A549 (cell line): ENCODE measurements at regions of chr12 and their contacts with region 1.

Region 1: DNA sequence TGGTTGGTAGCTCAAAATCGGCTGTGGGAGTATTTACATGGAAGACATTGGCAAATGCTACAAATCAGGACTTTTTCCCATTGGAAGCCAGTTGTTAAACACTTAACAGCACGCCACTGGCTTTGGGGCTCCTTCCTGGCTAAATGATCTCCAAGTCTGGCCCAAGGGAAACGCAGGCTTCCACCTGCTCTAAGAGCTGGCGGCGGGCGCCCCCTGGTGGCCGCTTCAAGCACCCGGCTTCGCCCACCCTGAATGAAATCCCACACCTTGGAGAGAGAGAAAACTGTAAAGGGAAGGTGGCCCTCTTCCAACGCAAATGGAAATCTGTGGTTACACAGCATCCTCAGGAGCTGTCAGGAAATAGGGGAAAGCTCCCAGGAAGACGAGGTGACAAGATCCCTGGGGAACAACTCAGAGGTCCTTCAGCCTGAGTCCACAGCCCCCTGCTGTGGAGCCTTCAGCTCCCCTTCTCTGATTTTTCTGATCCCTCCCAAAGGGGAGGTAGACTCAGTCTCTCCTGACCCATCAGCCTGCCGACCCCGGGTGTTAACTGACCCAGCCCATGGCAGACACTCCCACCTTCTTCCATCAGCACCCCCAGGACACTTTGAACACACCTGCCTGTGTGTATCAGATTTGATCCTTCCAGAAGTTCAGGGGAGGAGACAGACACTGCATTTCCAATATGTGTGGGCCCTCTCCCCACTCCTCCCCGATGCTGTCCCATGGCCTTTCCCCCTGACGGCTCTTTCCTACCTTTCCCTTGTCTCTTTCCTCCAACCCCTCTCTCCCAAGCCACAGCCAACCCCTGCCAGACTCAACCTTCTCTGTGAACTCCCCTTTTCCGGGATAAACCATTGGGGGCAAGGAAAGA is 15.4 kb downstream of the SELPLG start:
- DNase-seq: peak; percentile 86 to 90
- ATAC-seq: peak; percentile 81 to 94
- H3K4me3 ChIP-seq: no peak overlapping the region
- H3K27ac ChIP-seq: peak overlapping the region in 1 of 2 experiments; percentile 17; a peak in 2 of 6 replicates
- H3K4me1 ChIP-seq: peaks cover 7% of the 10 kb centered on the region
- CTCF ChIP-seq: peak; percentile 96
- EP300 ChIP-seq: no peak
- POLR2A ChIP-seq: no peak
- RAD21 ChIP-seq: peak; percentile 96 to 98

Region 2: DNA sequence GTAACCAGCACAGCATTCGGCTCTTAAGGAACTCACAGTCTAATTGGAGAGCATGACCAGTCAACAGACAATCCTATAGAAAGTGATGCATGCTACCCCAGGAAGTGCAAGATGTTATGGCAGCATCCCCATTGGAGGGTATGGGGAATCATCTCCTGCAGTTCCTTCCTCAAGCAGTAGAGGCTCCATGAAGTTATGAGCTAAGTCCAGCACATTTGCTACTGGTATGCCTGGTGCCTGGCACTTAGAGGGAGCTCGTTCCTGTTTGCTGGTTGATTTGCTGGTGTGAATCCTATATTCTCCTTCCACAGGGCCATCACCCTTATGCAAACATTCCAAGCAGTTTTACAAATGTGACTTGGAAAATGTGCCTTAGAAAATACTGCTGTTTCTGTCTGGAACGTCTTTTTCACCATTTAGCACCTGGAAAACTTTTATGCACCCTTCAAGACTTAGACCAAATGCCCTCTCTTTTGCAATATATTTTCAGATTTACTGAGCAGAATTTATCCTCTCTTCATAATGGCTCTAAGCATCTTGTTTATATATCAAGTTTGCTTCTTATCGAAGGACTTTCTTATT is 625.4 kb before region 1 on chr12:
- CTCF ChIA-PET with region 1: interaction called, 14 read pairs
- POLR2A ChIA-PET with region 1: no interaction called
- DNase-seq: peak; percentile 27 to 69
- ATAC-seq: peak; percentile 96 to 100
- H3K4me3 ChIP-seq: no peak overlapping the region
- H3K27ac ChIP-seq: no peak overlapping the region
- H3K4me1 ChIP-seq: no peaks in the 10 kb centered on the region
- CTCF ChIP-seq: peak; percentile 20; the same call in 2 of the 3 replicates
- EP300 ChIP-seq: no peak
- POLR2A ChIP-seq: no peak
- RAD21 ChIP-seq: peak in 1 of 2 experiments; percentile 45; a peak in 3 of 5 replicates

Region 3: GRCh38 chr12:108547686-108548085 is 70.6 kb before region 1 on chr12:
- CTCF ChIA-PET with region 1: interaction called, 12 read pairs
- POLR2A ChIA-PET with region 1: no interaction called
- DNase-seq: no peak
- ATAC-seq: no peak
- H3K4me3 ChIP-seq: no peak overlapping the region
- H3K27ac ChIP-seq: no peak overlapping the region
- H3K4me1 ChIP-seq: no peaks in the 10 kb centered on the region
- CTCF ChIP-seq: no peak
- EP300 ChIP-seq: no peak
- POLR2A ChIP-seq: no peak
- RAD21 ChIP-seq: no peak

Region 4: GRCh38 chr12:108583991-108584390 is 34.3 kb before region 1 on chr12:
- CTCF ChIA-PET with region 1: interaction called, 24 read pairs
- POLR2A ChIA-PET with region 1: no interaction called
- DNase-seq: no peak
- ATAC-seq: peak in 1 of 2 experiments; percentile 13; a peak in 3 of 6 replicates
- H3K4me3 ChIP-seq: no peak overlapping the region
- H3K27ac ChIP-seq: no peak overlapping the region
- H3K4me1 ChIP-seq: no peaks in the 10 kb centered on the region
- CTCF ChIP-seq: no peak
- EP300 ChIP-seq: no peak
- POLR2A ChIP-seq: no peak
- RAD21 ChIP-seq: no peak

Region 5: GRCh38 chr12:108633534-108634248 is 15.4 kb after region 1 on chr12 and contains the start of gene SELPLG:
- CTCF ChIA-PET with region 1: interaction called, 178 read pairs
- POLR2A ChIA-PET with region 1: no interaction called
- DNase-seq: no peak
- ATAC-seq: no peak
- H3K4me3 ChIP-seq: no peak within 1 kb of the TSS
- H3K27ac ChIP-seq: peak within 1 kb of the TSS; percentile 41 to 60; a peak in 5 of 6 replicates
- H3K4me1 ChIP-seq: peaks cover 35% of the 10 kb centered on the region
- CTCF ChIP-seq: no peak
- EP300 ChIP-seq: no peak
- POLR2A ChIP-seq: no peak
- RAD21 ChIP-seq: no peak
- polyA plus RNA-seq, gene SELPLG: 0.17 and 0.24 TPM in 2 replicates

Region 6: DNA sequence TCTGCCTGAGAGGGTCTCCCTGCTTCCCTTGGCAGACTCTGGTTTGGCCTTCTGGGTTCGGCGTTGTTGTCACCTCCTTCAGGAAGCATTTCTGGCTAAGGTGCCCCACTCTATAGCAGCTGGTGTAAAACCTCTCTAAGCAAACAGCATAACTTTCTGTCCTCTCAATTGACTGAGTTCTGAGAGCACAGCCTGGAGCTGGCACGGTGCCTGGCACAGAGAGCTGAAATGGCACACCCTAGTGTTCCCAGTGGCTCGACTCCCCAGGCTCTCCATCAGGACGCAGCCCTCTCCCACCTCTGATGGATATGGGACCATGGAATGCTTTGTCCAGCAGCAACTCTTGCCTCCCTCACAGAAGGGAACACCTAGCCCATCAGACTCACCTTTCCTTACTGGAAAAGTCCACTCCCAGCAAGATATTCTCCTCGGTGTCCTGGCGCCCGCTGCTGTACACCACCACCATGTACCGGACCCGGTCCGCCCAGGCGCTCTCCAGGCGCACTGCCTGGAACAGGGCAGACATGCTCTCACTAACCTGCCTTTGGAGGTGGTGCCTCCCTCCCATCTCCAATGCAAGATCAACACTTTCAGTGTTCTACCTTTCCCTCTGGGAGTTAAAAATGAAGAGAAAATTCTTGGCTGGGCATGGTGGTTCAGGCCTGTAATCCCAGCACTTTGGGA is 198.5 kb after region 1 on chr12:
- CTCF ChIA-PET with region 1: interaction called, 10 read pairs
- POLR2A ChIA-PET with region 1: no interaction called
- DNase-seq: no peak
- ATAC-seq: peak in 1 of 2 experiments; percentile 17; a peak in 1 of 6 replicates
- H3K4me3 ChIP-seq: no peak overlapping the region
- H3K27ac ChIP-seq: peak overlapping the region in 1 of 2 experiments; percentile 32; a peak in 4 of 6 replicates
- H3K4me1 ChIP-seq: peaks cover 11% of the 10 kb centered on the region; the same call in 2 of the 3 replicates
- CTCF ChIP-seq: no peak
- EP300 ChIP-seq: no peak
- POLR2A ChIP-seq: no peak; the same call in 1 of the 2 replicates
- RAD21 ChIP-seq: no peak